Activated CD4-positive, alpha-beta memory T cell treated with anti-CD3 and anti-CD28 coated beads, Interleukin-2, amount 10 ng/mL, durations not matched to agents 7 days and 5 days (primary cell): ENCODE measurements at regions of chr10 and their contacts with region 1.

Region 1: GRCh38 chr10:103895411-103896186 is 22.4 kb downstream of the STN1 start:
- DNase-seq: no peak
- H3K4me3 Mint-ChIP-seq: peak overlapping the region; percentile 7
- H3K27ac Mint-ChIP-seq: peak overlapping the region; percentile 91
- H3K4me1 Mint-ChIP-seq: peaks cover 71% of the 10 kb centered on the region
- H3K27me3 Mint-ChIP-seq: no peaks in the 10 kb centered on the region

Region 2: DNA sequence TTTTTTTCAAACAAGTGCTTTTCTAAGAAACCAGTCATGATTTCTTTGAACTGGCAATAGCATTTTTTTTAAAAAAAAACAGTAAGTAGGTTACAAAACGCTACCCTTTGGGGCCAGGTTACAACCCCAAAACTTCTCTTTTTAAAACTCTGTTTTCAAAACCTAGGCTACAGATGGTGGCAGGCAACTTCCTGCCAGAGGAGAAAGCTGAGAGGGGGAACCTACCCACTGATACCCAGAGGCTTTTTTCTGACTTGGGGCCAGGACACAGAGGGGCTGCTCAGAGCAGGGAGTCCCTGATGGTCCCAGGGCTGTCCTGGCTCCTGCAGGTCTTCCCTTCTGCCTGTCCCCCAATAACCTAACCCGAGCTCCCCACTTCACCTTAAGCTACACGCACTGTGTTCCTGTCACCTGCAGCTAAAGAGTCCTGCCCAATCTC is 15.4 kb after region 1 on chr10:
- CTCF ChIA-PET with region 1: interaction called, 30 read pairs
- POLR2A ChIA-PET with region 1: interaction called, 104 read pairs
- DNase-seq: peak; percentile 69
- H3K4me3 Mint-ChIP-seq: peak overlapping the region; percentile 65
- H3K27ac Mint-ChIP-seq: peak overlapping the region; percentile 98
- H3K4me1 Mint-ChIP-seq: peaks cover 76% of the 10 kb centered on the region
- H3K27me3 Mint-ChIP-seq: no peaks in the 10 kb centered on the region

Region 3: DNA sequence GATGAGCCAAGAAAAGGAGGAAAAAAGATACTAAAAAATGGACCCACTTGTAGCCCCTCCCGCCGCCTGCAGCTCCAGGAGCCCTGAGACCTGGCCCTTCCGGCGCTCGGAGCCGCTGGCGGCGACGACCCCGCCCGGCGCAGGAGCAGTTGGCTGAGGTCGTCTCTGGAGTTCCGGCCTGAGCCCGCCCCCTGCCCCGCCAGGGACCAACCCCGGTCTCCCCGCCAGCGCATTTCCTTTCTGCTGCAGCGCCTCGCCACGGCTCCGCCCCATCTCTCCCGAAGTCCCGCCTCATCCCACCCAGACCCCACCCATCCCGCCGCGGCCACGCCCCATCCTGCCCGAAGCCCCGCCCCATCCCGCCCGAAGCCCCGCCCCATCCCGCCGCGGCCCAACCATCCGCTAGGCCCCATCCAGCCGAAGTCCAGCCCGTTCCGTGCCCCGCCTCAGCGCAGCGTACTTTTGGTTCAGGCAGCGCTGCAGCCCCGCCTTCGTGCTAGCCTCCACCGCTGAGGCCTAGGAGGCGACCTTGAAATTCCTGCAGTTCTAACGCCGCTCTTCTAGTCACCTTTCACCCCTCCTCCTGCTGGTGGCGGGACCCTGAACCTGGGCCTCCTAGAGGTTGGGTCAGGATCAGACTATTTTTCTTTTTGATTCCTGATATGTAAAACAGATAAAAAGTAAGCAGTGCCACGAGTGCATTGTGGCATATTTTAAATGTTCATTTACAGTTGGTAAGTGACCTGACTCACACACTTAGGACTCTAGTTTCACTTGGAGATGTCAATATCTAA is 22.7 kb after region 1 on chr10 and contains the start of gene STN1:
- CTCF ChIA-PET with region 1: interaction called, 15 read pairs
- POLR2A ChIA-PET with region 1: interaction called, 104 read pairs
- DNase-seq: peak; percentile 97
- H3K4me3 Mint-ChIP-seq: peak within 1 kb of the TSS; percentile 91
- H3K27ac Mint-ChIP-seq: peak within 1 kb of the TSS; percentile 93
- H3K4me1 Mint-ChIP-seq: peaks cover 37% of the 10 kb centered on the region
- H3K27me3 Mint-ChIP-seq: no peaks in the 10 kb centered on the region
- total RNA-seq, gene STN1: 55.1 to 56.8 TPM

Region 4: DNA sequence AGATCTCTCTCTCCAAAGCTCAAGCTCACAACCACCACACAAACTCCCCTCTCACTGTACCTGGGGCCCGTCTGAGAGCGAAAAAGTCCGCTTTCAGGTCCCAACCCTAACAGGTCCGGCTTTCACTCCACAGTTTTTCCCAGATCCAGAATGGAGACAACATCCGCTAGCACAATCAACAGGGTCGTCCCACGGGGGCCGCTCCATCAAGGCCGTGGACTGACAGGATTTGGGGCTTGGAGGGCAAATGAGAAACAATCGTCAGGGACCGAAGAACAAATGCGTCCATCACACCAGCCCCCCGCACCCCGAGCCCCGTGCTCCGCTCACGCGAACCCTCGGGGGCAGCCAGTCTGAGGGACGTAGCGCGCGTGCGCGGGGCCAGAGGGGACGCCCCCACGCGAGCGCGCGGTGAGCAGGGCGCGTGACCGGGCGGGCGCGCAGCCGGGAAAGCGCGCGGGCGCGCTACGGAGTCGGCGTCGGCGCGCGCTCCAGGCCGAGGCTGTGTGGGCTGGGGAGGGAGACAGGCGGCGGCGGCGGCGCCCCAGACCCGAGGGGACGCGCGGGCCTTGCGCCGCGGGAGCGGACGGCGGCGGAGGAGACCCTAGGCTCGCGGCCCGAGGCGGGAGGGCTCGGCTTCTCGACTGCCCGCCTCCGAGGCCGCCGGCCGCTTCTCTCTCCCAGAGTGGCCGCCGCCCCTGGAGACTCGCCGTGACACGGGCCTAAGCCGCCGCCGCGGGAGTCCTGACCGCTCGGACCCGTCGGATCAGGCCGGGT is 71.3 kb after region 1 on chr10 and contains the start of gene SLK:
- CTCF ChIA-PET with region 1: interaction called, 6 read pairs
- POLR2A ChIA-PET with region 1: interaction called, 10 read pairs
- DNase-seq: peak; percentile 86
- H3K4me3 Mint-ChIP-seq: peak within 1 kb of the TSS; percentile 100
- H3K27ac Mint-ChIP-seq: peak within 1 kb of the TSS; percentile 86
- H3K4me1 Mint-ChIP-seq: peaks cover 33% of the 10 kb centered on the region
- H3K27me3 Mint-ChIP-seq: no peaks in the 10 kb centered on the region
- total RNA-seq, gene SLK: 32.7 to 36.3 TPM